T-cell (primary cell): ENCODE measurements at regions of chr7 and their contacts with region 1.

Region 1: DNA sequence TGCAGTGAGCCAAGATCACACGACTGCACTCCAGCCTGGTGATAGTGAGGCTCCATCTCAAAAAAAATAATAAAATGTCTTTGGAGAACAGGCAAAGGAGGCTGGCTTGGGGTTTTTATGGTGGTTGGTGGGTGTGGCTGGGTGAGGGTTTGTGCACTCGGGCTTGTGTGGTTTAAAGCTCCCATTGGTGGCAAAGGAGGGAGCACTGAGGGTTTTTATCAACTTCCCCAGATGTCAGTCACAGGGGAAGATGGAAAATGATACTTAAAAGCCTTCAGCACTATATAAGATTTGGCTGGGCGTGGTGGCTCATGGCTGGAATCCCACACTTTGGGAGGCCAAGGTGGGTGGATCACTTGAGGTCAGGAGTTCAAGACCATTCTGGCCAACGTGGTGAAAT is 16.3 kb upstream of the RNF216 start:
- DNase-seq: peak in 2 of 35 experiments; percentile 10 to 15
- ATAC-seq: no peak
- H3K4me3 ChIP-seq: no peak overlapping the region
- H3K4me3 Mint-ChIP-seq: no peak overlapping the region
- H3K27ac ChIP-seq: no peak overlapping the region
- H3K27ac Mint-ChIP-seq: peak overlapping the region in 1 of 2 donors; percentile 32
- H3K4me1 ChIP-seq: peaks cover 0 to 6% of the 10 kb centered on the region in 2 experiments
- H3K4me1 Mint-ChIP-seq: peaks cover 0 to 6% (median 4%) of the 10 kb centered on the region in 3 donors
- H3K27me3 ChIP-seq: no peaks in the 10 kb centered on the region
- H3K27me3 Mint-ChIP-seq: no peaks in the 10 kb centered on the region

Region 2: GRCh38 chr7:5064391-5065106 is 733.2 kb before region 1 on chr7:
- CTCF ChIA-PET with region 1: no interaction called
- POLR2A ChIA-PET with region 1: interaction called in 1 of 2 experiments, 19 read pairs
- DNase-seq: no peak
- ATAC-seq: no peak
- H3K4me3 ChIP-seq: no peak overlapping the region
- H3K4me3 Mint-ChIP-seq: no peak overlapping the region
- H3K27ac ChIP-seq: no peak overlapping the region
- H3K27ac Mint-ChIP-seq: no peak overlapping the region
- H3K4me1 ChIP-seq: no peaks in the 10 kb centered on the region
- H3K4me1 Mint-ChIP-seq: no peaks in the 10 kb centered on the region
- H3K27me3 ChIP-seq: no peaks in the 10 kb centered on the region
- H3K27me3 Mint-ChIP-seq: no peaks in the 10 kb centered on the region

Region 3: DNA sequence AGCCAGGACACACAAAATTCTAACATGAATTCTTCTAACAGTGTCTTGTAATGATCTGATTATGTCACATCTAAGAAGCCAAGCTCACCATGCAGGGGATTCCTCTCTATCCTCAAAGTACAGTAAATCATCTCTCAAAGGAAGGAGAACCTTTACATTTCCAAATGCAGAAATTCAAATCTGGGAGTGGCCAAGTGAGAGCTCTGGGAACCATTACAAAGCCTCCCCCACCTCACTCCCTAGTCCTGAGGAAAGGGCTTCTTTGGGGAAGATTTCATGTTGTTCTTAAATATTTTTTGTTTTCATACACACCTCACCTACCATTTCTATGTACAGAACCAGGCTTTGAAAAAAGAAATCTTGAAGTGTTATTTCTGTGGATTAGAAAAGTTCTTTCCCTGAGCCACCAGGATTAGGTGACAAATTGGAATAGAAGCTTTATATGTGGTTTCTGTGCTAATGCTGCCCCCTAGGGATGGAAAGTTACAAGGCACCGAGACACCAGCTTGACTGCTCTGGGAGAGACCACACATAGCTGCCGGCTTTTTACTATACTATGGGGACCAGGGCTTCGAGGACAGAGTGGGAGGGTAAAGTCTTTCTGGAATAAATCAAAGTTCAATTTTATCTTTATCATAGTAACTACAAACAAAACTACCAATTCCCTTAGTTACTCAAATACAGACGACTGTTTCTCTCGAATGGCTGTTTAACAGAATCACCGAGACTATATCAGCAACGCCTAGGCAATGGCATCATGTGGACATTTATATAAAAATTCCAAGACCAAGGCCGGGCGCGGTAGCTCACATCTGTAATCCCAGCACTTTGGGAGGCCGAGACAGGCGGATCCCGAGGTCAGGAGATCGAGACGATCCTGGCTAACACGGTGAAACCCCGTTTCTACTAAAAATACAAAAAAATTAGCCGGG is 132.4 kb before region 1 on chr7:
- CTCF ChIA-PET with region 1: no interaction called
- POLR2A ChIA-PET with region 1: no interaction called
- DNase-seq: peak; percentile 17 to 86 (median 50)
- ATAC-seq: peak; percentile 68 to 83 (median 74)
- H3K4me3 ChIP-seq: no peak overlapping the region
- H3K4me3 Mint-ChIP-seq: no peak overlapping the region
- H3K27ac ChIP-seq: no peak overlapping the region
- H3K27ac Mint-ChIP-seq: peak overlapping the region in 1 of 2 donors; percentile 29
- H3K4me1 ChIP-seq: peaks cover 4 to 13% of the 10 kb centered on the region in 2 experiments
- H3K4me1 Mint-ChIP-seq: peaks cover 21 to 33% (median 26%) of the 10 kb centered on the region in 3 donors
- H3K27me3 ChIP-seq: no peaks in the 10 kb centered on the region
- H3K27me3 Mint-ChIP-seq: no peaks in the 10 kb centered on the region

Region 4: GRCh38 chr7:5713124-5713912 is 84.4 kb before region 1 on chr7:
- CTCF ChIA-PET with region 1: no interaction called
- POLR2A ChIA-PET with region 1: no interaction called
- DNase-seq: no peak
- ATAC-seq: no peak
- H3K4me3 ChIP-seq: no peak overlapping the region
- H3K4me3 Mint-ChIP-seq: no peak overlapping the region
- H3K27ac ChIP-seq: no peak overlapping the region
- H3K27ac Mint-ChIP-seq: peak overlapping the region in 1 of 2 donors; percentile 48
- H3K4me1 ChIP-seq: no peaks in the 10 kb centered on the region
- H3K4me1 Mint-ChIP-seq: no peaks in the 10 kb centered on the region
- H3K27me3 ChIP-seq: no peaks in the 10 kb centered on the region
- H3K27me3 Mint-ChIP-seq: no peaks in the 10 kb centered on the region